PC-9 (cell line): ENCODE measurements at regions of chr3 and their contacts with region 1.

Region 1: DNA sequence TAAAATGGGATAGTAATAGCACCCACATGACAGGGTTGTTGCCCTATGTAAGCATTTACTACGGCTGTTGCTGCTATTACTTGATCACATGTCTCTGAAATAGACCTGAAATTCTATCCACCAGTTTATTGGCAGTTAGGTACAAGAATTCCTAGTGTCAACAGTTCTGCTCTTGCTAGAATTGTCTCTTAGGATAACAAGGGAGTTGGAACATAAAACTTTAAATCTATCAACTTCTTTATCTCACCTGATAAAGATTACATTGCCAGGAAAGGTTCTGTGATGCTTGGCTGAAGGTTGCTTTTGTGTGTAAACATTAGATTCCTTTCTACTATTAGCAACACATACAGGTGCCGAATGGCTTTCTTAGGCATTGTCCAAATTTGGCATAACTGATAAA is 38.7 kb downstream of the ATP13A4 start:
- DNase-seq: no peak
- H3K4me3 ChIP-seq: no peak overlapping the region
- H3K27ac ChIP-seq: no peak overlapping the region
- H3K4me1 ChIP-seq: no peaks in the 10 kb centered on the region
- H3K27me3 ChIP-seq: peaks cover 89% of the 10 kb centered on the region
- CTCF ChIP-seq: no peak

Region 2: DNA sequence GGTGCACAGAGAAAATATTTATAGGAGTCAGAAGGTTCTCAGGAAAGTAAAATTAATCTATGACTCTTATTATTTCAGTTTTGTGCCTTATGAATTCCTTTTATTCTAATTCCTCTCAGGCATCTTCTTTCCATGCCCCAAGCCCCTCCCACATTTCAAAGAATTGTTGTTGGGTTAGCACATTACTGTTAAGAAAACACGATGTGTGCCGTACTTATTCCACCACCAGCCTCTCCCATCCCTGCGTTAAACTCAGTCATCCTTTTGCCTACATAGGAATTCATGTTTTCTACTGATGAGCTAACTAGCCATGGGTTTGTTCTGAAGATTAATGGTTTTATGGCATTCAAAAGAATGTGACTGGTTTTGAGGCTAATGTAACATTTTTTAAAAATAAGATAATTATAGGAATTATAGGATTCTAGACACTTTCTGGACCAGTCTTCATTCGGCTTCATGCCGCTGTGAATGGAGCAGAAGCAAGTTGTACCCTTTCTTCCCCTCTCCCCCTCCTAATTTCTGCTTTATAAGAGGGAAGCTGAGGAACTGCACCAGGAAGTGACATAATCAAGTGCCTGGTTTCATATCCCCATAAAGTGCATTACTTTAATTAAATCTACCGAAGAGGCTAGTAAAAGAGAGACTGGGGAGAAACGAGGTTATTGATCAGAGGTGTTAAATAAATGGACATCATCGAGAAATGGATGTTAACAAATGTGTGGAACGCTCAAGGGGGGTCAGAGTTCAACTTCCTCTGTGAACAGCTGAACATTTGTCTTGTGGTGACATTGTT is 586.0 kb before region 1 on chr3:
- CTCF ChIA-PET with region 1: no interaction called
- POLR2A ChIA-PET with region 1: interaction called, 14 read pairs
- intact Hi-C with region 1: no loop called
- DNase-seq: no peak
- H3K4me3 ChIP-seq: no peak overlapping the region
- H3K27ac ChIP-seq: no peak overlapping the region
- H3K4me1 ChIP-seq: no peaks in the 10 kb centered on the region
- H3K27me3 ChIP-seq: no peaks in the 10 kb centered on the region
- CTCF ChIP-seq: no peak

Region 3: DNA sequence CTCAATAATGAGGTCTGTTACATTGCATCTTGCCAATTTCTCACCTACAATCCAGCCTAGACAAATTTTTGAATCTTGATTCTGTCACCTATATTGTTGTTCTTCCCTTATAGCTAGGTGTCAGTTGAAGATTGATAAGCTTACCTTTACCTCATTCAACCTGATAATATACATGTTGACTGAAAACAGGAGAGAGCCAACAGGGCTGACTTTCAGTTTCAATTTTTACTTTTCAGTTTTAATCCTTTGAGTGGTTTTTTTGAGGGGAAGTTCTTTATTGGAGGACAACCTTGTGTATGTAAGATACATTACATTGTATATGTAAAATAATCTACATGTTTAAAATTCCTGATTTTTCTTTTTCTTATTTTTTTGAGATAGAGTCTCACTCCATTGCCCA is 143.2 kb before region 1 on chr3:
- CTCF ChIA-PET with region 1: no interaction called
- POLR2A ChIA-PET with region 1: no interaction called
- intact Hi-C with region 1: no loop called
- DNase-seq: no peak
- H3K4me3 ChIP-seq: no peak overlapping the region
- H3K27ac ChIP-seq: no peak overlapping the region
- H3K4me1 ChIP-seq: no peaks in the 10 kb centered on the region
- H3K27me3 ChIP-seq: peaks cover 47% of the 10 kb centered on the region
- CTCF ChIP-seq: no peak